ENCODE measurements at regions of chrX and their contacts with region 1.

Region 1: GRCh38 chrX:23817172-23817601 is 34.2 kb downstream of the SAT1 start:
- DNase-seq: peak; percentile 32

Region 2: DNA sequence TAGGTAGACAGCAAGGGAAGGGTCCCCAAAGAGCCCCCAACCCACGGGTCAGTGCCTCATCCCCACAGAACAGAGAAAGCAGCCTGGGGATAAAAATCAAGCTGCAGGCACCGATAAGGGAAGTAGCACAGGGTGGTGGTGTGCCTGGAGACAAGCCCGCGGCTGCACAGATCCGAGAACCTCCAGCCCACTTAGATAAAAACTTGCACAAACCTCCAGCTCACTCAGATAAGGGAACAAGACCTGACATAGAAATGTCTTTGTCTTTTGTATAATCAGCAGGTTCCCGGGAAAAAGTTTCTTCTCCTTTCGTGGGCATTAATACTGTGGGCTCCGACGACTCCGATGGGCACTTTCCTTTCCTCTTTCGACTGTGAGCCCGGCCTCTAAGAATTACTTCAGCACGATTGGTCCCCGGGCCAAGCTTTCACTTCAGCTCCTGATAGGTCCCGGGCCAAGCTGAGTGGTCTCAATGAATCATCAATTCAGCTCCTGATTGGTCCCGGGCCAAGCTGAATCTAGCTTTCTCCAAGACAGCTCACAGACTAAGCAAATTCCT is 117.5 kb before region 1 on chrX:
- in situ Hi-C with region 1: loop called (anchors 25 kb)
- DNase-seq: peak; percentile 86